ENCODE measurements at regions of chr12 and their contacts with region 1.

Region 1: GRCh38 chr12:949453-950191 is at the start of gene RAD52:
- DNase-seq: peak; percentile 98 to 99
- H3K4me3 ChIP-seq: peak within 1 kb of the TSS; percentile 62
- H3K27ac ChIP-seq: peak within 1 kb of the TSS; percentile 79
- H3K4me1 ChIP-seq: peaks cover 19% of the 10 kb centered on the region
- H3K27me3 ChIP-seq: no peaks in the 10 kb centered on the region
- CTCF ChIP-seq: peak; percentile 99
- total RNA-seq, gene RAD52: 19.7 and 25.0 TPM in 2 replicates

Region 2: DNA sequence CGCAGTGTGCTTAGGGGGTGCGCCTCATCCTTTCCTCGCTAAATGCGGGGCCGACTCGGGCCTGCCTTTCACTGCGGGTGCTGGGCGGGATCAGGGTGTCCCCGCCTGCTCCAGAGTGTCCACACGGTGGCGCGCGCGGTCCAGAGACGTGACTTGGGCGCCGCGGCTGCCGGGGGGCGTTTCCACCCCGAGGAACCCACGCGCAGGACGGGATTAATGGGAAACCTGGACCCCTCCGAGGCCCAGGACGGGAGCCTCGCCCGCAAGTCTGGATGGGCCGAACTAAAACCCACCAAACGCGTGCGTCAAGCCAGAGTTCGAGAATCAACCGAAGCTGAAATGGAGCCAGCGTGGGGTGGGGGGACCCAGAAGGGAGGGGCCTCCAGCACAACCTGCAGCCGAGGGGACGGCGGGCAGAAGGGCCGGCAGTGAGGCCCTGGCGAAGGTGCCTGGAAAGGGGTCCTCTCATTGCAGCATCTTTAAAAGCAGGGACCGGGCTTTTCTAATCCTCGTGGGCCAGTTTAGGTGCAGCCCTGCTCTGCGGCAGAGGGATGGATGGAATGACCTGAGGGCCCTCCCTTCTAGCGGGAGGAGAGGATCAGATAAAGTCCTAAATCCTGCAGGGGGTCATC is 379.7 kb before region 1 on chr12:
- CTCF ChIA-PET with region 1: interaction called, 3 read pairs
- POLR2A ChIA-PET with region 1: interaction called, 3 read pairs
- intact Hi-C with region 1: loop called (anchors 1 kb)
- DNase-seq: peak; percentile 61 to 90
- H3K4me3 ChIP-seq: peak overlapping the region; percentile 77
- H3K27ac ChIP-seq: peak overlapping the region; percentile 84; the same call in 1 of the 2 replicates
- H3K4me1 ChIP-seq: peaks cover 25% of the 10 kb centered on the region
- H3K27me3 ChIP-seq: no peaks in the 10 kb centered on the region
- CTCF ChIP-seq: peak; percentile 94

Region 3: DNA sequence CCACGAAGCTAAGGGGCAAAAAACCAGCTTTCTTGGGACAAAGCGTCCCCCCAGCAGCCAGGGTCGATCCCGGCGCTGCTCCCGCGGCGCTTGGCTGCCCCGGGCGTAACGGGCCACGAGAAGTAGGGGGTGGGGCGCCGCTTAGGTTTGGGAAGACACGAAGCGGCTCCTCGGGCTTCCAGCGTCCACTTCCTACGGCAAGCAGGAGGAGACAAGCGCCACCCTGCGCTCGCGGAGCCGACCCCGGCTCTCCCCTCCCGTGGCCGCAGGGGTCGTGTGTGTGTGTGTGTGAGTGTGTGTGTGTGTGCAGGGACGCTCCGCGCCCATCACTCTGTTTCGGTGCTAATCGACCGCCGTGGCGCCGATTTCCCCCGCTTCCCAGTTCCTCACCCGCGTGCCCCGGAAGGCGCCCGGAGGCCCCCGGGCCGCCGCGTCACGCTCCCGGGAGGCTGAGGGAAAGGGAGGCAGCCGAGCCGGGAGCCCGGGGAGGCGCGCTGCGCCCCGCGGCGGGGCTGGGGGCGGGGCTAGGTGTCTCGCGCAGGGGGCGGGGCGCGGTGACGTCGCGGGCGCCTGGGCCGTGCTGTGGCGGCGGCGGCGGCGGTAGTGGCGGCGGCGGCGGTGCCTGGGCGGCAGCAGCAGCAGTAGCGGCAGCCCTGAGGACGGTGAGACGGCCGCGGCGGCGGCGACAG is 41.2 kb after region 1 on chr12 and contains the start of gene ERC1:
- CTCF ChIA-PET with region 1: interaction called, 11 read pairs
- POLR2A ChIA-PET with region 1: interaction called, 6 read pairs
- intact Hi-C with region 1: loop called (anchors 1 kb)
- DNase-seq: peak; percentile 61 to 93
- H3K4me3 ChIP-seq: peak within 1 kb of the TSS; percentile 83
- H3K27ac ChIP-seq: peak within 1 kb of the TSS; percentile 72
- H3K4me1 ChIP-seq: peaks cover 34% of the 10 kb centered on the region
- H3K27me3 ChIP-seq: no peaks in the 10 kb centered on the region
- CTCF ChIP-seq: no peak
- total RNA-seq, gene ERC1: 47.2 and 52.0 TPM in 2 replicates

Region 4: GRCh38 chr12:1130164-1130563 is 180.5 kb after region 1 on chr12:
- CTCF ChIA-PET with region 1: no interaction called
- POLR2A ChIA-PET with region 1: interaction called, 13 read pairs
- intact Hi-C with region 1: no loop called
- DNase-seq: peak; percentile 74 to 98
- H3K4me3 ChIP-seq: peak overlapping the region; percentile 13; the same call in 1 of the 2 replicates
- H3K27ac ChIP-seq: peak overlapping the region; percentile 69
- H3K4me1 ChIP-seq: peaks cover 34% of the 10 kb centered on the region
- H3K27me3 ChIP-seq: no peaks in the 10 kb centered on the region
- CTCF ChIP-seq: no peak

Region 5: DNA sequence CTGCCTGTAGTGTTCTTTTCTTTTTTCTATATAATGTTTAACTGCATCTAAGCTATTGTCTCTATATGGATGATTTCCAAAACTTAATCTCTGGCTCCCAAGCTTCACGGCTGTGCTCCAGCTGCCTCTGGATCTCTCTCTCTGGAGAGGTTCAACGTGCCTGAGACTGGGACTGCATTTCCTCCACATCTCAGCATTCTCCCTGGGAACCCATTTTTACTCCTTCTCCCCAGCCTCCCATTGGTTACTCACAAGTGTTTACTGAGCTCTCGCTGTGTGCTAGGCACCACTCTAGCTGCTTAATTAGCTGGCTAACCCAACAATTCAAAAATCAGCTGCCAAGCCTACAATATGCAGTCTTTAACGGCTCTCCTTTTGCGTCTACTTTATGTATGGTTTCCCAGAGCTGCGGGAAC is 610.1 kb after region 1 on chr12:
- CTCF ChIA-PET with region 1: no interaction called
- POLR2A ChIA-PET with region 1: no interaction called
- intact Hi-C with region 1: no loop called
- DNase-seq: no peak
- H3K4me3 ChIP-seq: no peak overlapping the region
- H3K27ac ChIP-seq: no peak overlapping the region
- H3K4me1 ChIP-seq: no peaks in the 10 kb centered on the region
- H3K27me3 ChIP-seq: no peaks in the 10 kb centered on the region
- CTCF ChIP-seq: no peak

Region 6: DNA sequence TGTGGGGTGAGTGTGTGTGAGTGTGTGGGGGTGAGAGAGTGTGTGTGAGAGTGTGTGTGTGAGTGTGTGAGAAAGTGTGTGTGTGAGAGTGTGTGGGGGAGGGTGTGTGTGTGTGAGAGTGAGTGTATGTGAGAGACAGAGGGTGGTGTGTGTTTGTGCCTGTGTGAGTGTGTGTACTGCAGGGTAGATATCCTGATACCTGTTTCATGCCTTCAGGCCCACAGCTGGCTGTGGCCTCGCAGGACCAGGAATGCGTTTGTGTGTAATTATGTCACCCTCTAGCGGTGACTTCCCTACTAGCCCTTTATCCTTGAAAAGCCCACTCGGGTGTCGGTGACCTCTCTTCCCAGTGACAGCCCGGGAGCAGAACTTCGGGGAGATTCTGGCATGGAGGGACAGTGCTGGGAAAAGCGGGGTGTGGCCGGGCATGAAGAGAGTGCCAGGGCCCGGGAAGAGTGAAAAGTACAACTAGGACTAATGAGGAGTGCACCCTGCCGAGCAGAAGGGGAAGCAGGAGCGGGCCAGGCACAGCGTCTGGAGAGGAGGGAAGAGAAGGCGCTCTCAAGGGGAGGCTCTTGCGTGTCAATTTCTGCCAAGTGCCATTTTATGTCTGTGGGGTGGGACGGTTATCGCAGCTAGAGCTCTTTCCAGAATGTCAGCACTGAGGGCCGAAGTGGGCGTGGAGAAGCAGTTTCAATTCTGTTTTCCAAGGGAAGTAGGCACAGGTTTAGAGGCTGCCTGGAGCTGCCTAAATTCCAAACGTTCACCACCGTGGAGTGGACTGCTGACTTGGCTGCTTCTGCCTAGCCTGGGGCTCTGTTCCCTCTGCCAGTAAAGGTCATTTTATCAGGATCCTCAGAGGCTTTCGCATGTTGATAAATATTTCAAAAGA is 655.8 kb after region 1 on chr12:
- CTCF ChIA-PET with region 1: no interaction called
- POLR2A ChIA-PET with region 1: no interaction called
- intact Hi-C with region 1: loop called (anchors 5 kb)
- DNase-seq: peak; percentile 74 to 83
- H3K4me3 ChIP-seq: peak overlapping the region; percentile 47
- H3K27ac ChIP-seq: peak overlapping the region; percentile 64
- H3K4me1 ChIP-seq: peaks cover 29% of the 10 kb centered on the region
- H3K27me3 ChIP-seq: no peaks in the 10 kb centered on the region
- CTCF ChIP-seq: peak; percentile 90

Measured in PC-9 (cell line).